ENCODE measurements at regions of chr13 and their contacts with region 1.

Region 1: DNA sequence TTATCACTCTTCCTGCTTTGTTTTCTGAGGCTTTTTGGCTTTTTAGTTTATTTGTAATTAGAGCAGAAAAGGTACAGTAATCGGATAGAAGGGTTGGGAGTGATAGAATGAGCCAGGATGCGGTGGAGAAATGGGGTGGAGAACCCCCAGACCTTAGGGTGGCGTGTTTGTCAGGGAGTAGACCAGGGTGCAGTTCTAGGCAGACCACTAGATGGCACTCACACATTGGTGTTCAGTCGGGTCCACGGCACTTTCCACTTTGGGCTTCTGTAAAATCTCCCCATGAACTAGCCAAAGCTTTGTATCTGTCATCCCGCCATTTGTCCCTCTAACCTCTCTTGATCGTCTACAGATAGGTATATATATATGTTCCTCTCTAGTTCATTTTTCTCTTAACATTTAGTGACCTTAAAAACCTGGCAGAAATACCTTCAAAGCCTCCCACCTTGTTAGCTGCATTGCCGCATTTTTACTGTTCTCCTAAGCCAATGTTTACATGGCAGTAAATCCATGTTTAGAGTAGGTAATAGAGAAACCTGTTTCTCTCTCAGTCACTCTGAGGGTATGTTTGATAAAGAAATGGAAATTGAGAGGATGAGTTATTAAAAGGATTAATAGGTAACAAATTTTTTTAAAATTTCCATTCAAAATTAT is 154.9 kb downstream of the TM9SF2 start:
- DNase-seq: peak; percentile 47 to 84
- ATAC-seq: peak; percentile 65 to 77; a peak in 5 of 6 replicates
- H3K4me3 ChIP-seq: peak overlapping the region; percentile 42
- H3K27ac ChIP-seq: peak overlapping the region; percentile 91 to 93
- H3K4me1 ChIP-seq: peaks cover 29% of the 10 kb centered on the region
- CTCF ChIP-seq: peak; percentile 83
- EP300 ChIP-seq: no peak
- POLR2A ChIP-seq: no peak
- RAD21 ChIP-seq: peak; percentile 82 to 84

Region 2: GRCh38 chr13:99617474-99618255 is 38.6 kb before region 1 on chr13:
- CTCF ChIA-PET with region 1: interaction called, 10 read pairs
- POLR2A ChIA-PET with region 1: no interaction called
- DNase-seq: peak; percentile 40 to 67
- ATAC-seq: peak; percentile 82 to 89; a peak in 5 of 6 replicates
- H3K4me3 ChIP-seq: no peak overlapping the region
- H3K27ac ChIP-seq: peak overlapping the region; percentile 69 to 79
- H3K4me1 ChIP-seq: peaks cover 13% of the 10 kb centered on the region; the same call in 2 of the 3 replicates
- CTCF ChIP-seq: peak; percentile 75
- EP300 ChIP-seq: no peak
- POLR2A ChIP-seq: no peak
- RAD21 ChIP-seq: peak; percentile 85 to 92

Region 3: DNA sequence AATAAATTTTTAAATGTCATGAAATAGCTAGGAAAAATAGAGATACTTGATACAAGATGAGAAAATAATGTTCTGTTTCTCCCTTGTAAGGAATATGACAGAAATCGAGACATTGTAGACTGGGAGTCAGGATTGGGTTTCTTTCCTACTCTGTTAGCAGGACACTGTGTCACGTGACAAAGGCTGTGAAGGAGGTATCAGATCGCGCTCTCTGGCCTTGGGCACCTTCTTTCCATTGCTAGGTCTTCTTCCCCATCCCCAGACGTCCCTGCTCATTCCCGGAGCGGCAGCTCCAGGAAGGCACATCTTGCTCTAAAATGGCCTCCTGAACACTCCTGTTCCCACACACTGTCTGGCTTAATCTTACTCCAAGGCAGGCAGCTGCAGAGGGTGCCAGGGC is 21.5 kb before region 1 on chr13:
- CTCF ChIA-PET with region 1: interaction called, 15 read pairs
- POLR2A ChIA-PET with region 1: interaction called, 3 read pairs
- DNase-seq: no peak
- ATAC-seq: no peak
- H3K4me3 ChIP-seq: no peak overlapping the region
- H3K27ac ChIP-seq: no peak overlapping the region
- H3K4me1 ChIP-seq: no peaks in the 10 kb centered on the region
- CTCF ChIP-seq: no peak
- EP300 ChIP-seq: no peak
- POLR2A ChIP-seq: no peak
- RAD21 ChIP-seq: no peak

Region 4: DNA sequence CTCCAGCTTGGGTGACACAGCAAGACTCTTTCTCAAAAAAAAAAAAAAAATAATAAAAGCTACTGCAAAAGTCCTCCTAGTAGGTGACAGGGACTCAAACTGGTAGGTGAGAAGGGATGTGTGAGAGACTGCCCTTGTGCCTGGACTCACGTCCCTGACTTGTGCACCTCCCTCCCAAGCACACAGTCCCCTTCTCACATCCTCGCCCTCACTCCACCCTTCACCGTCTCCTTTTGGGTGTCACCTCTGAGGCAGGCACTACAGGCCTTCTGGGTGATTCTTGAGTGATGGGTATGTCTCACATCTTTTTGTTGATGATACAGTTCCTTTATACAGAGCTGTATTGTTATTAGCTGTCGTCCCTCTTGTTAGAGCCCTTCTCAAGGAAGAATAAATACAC is 15.5 kb after region 1 on chr13:
- CTCF ChIA-PET with region 1: interaction called, 11 read pairs
- POLR2A ChIA-PET with region 1: no interaction called
- DNase-seq: no peak
- ATAC-seq: no peak
- H3K4me3 ChIP-seq: no peak overlapping the region
- H3K27ac ChIP-seq: no peak overlapping the region
- H3K4me1 ChIP-seq: no peaks in the 10 kb centered on the region
- CTCF ChIP-seq: no peak
- EP300 ChIP-seq: no peak
- POLR2A ChIP-seq: no peak
- RAD21 ChIP-seq: no peak

Region 5: DNA sequence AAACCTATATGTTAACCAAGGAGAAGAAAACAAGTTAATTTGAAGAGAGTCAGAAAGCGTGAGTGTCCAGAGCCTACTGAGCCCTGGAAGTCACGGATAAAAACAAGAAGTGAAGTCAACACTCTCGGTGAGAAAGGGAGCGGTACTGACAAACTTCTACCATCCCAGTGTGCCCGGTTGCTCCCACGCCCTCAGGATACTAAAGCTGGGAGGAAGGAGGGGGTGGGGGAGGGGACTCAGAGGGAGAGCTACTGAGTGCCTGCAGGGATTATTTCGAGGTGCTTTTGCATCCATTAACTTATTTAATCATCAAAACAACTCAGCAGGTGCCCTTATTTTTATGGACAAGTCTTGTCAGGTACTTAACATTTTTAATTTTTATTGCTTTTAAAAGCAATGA is 149.1 kb after region 1 on chr13:
- CTCF ChIA-PET with region 1: no interaction called
- POLR2A ChIA-PET with region 1: no interaction called
- DNase-seq: no peak
- ATAC-seq: no peak
- H3K4me3 ChIP-seq: no peak overlapping the region
- H3K27ac ChIP-seq: no peak overlapping the region
- H3K4me1 ChIP-seq: peaks cover 5% of the 10 kb centered on the region; the same call in 1 of the 3 replicates
- CTCF ChIP-seq: no peak
- EP300 ChIP-seq: no peak
- POLR2A ChIP-seq: no peak
- RAD21 ChIP-seq: no peak

Region 6: DNA sequence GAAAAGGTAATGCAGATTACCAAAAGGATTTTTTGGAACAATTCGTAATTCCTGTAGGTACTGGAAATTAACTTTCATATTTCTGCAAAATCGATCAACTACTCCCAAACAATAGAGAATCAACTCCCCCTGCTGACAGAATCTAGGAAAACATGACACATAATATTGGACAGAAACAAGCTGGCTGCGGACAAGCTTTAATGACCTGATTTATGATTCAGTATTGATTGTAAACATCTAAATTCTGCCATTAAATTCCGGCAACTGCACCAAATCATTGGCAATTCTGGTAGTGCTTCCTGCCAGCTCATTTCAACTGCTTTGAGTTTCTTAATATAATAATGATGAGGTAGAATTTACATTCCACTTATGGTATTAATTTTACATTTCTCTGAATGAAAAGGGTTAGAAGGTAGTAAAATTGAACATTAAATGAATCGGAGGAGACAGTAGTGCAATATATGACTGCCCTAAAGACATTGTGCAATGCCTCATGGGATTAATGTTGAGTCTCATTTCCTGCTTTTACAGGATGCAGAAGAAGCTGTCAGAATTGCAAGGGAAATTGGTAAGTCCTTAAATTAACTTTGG is 579.2 kb after region 1 on chr13:
- CTCF ChIA-PET with region 1: interaction called, 13 read pairs
- POLR2A ChIA-PET with region 1: no interaction called
- DNase-seq: peak; percentile 23 to 46
- ATAC-seq: peak in 1 of 2 experiments; percentile 52; a peak in 2 of 6 replicates
- H3K4me3 ChIP-seq: no peak overlapping the region
- H3K27ac ChIP-seq: peak overlapping the region in 1 of 2 experiments; percentile 80; a peak in 4 of 6 replicates
- H3K4me1 ChIP-seq: peaks cover 32% of the 10 kb centered on the region
- CTCF ChIP-seq: peak; percentile 64
- EP300 ChIP-seq: no peak
- POLR2A ChIP-seq: no peak
- RAD21 ChIP-seq: peak; percentile 79 to 81

Region 7: GRCh38 chr13:100514788-100515409 is 858.7 kb after region 1 on chr13:
- CTCF ChIA-PET with region 1: interaction called, 14 read pairs
- POLR2A ChIA-PET with region 1: no interaction called
- DNase-seq: peak; percentile 67 to 89
- ATAC-seq: peak; percentile 97 to 98
- H3K4me3 ChIP-seq: no peak overlapping the region
- H3K27ac ChIP-seq: peak overlapping the region; percentile 35 to 56; a peak in 4 of 6 replicates
- H3K4me1 ChIP-seq: peaks cover 43% of the 10 kb centered on the region
- CTCF ChIP-seq: peak; percentile 84
- EP300 ChIP-seq: no peak
- POLR2A ChIP-seq: no peak
- RAD21 ChIP-seq: peak; percentile 93 to 95